H1 (cell line): ENCODE measurements at regions of chr19 and their contacts with region 1.

Region 1: DNA sequence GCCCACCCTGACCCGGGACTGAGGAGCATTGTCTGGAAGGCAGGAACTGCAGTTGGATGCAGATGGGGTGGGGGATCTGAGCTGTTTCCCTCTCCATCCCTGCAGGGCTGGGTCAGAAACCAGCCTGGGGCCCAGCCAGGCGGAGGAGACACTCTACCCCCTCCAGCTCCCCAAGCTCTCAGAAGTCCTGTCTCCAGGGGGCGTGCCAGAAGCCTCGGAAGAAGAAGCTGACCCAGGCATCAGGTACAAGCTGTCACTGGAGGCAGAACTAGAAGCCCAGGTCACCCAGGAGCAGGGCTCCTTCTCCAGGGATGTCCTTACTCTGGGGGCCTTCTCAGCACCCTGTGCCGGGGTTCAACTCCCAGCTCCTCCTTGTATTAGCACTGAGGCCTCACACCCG is 15.5 kb downstream of the SIX5 start:
- DNase-seq: peak in 1 of 2 experiments; percentile 77
- H3K4me3 ChIP-seq: no peak overlapping the region
- H3K27ac ChIP-seq: no peak overlapping the region
- H3K4me1 ChIP-seq: peaks cover 0 to 6% (median 0%) of the 10 kb centered on the region in 4 experiments; a peak in 1 of 7 replicates
- H3K27me3 ChIP-seq: no peaks in the 10 kb centered on the region
- CTCF ChIP-seq: peak; percentile 35 to 55 (median 39); a peak in 3 of 4 replicates
- EP300 ChIP-seq: no peak
- POLR2A ChIP-seq: no peak
- RAD21 ChIP-seq: peak; percentile 17 to 39; a peak in 3 of 4 replicates

Region 2: GRCh38 chr19:45632468-45633196 is 120.9 kb before region 1 on chr19:
- CTCF ChIA-PET with region 1: no interaction called
- POLR2A ChIA-PET with region 1: no interaction called
- DNase-seq: peak in 1 of 2 experiments; percentile 99
- H3K4me3 ChIP-seq: peak overlapping the region; percentile 22 to 50 (median 36); a peak in 7 of 8 replicates
- H3K27ac ChIP-seq: 0 out of 2 replicates have a peak overlapping the region, but pooled peaks have one; percentile 1
- H3K4me1 ChIP-seq: peaks cover 0 to 8% (median 7%) of the 10 kb centered on the region in 4 experiments; a peak in 5 of 7 replicates
- H3K27me3 ChIP-seq: no peaks in the 10 kb centered on the region
- CTCF ChIP-seq: no peak
- EP300 ChIP-seq: no peak
- POLR2A ChIP-seq: no peak; a peak in 1 of 3 replicates
- RAD21 ChIP-seq: no peak

Region 3: GRCh38 chr19:45742969-45743368 is 10.6 kb before region 1 on chr19:
- CTCF ChIA-PET with region 1: interaction called, 10 read pairs
- POLR2A ChIA-PET with region 1: interaction called, 10 read pairs
- DNase-seq: no peak
- H3K4me3 ChIP-seq: no peak overlapping the region
- H3K27ac ChIP-seq: no peak overlapping the region
- H3K4me1 ChIP-seq: no peaks in the 10 kb centered on the region
- H3K27me3 ChIP-seq: no peaks in the 10 kb centered on the region; a peak in 1 of 7 replicates
- CTCF ChIP-seq: no peak
- EP300 ChIP-seq: no peak
- POLR2A ChIP-seq: no peak
- RAD21 ChIP-seq: no peak

Region 4: GRCh38 chr19:45764945-45765701 is 11.6 kb after region 1 on chr19:
- CTCF ChIA-PET with region 1: interaction called, 16 read pairs
- POLR2A ChIA-PET with region 1: interaction called, 153 read pairs
- DNase-seq: peak in 1 of 2 experiments; percentile 65
- H3K4me3 ChIP-seq: peak overlapping the region in 1 of 4 experiments; percentile 36; a peak in 1 of 8 replicates
- H3K27ac ChIP-seq: no peak overlapping the region
- H3K4me1 ChIP-seq: peaks cover 7 to 37% (median 29%) of the 10 kb centered on the region in 4 experiments
- H3K27me3 ChIP-seq: peaks cover 0 to 2% (median 0%) of the 10 kb centered on the region in 4 experiments; a peak in 1 of 7 replicates
- CTCF ChIP-seq: no peak
- EP300 ChIP-seq: no peak
- POLR2A ChIP-seq: peak in 1 of 2 experiments; percentile 29; a peak in 1 of 3 replicates
- RAD21 ChIP-seq: no peak

Region 5: DNA sequence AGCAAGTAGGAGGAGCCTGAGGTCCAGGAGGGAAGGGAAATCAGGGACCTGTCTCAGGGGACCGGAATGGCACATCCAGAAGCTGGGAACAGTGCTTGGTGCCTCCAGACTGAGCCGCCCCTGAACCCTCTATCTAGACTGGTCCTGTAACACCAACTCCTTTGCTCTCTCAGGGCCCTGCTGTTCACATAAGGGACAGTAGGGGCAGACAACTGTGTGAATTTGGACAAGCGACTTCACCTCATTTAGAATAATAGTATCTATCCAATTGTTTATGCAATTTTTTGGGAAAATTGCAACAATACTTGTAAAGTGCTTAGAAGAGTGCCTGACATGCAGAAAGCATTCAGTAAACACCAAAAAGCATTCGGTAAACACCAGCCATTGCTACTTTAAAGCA is 95.4 kb after region 1 on chr19:
- CTCF ChIA-PET with region 1: no interaction called
- POLR2A ChIA-PET with region 1: no interaction called
- DNase-seq: no peak
- H3K4me3 ChIP-seq: no peak overlapping the region
- H3K27ac ChIP-seq: no peak overlapping the region
- H3K4me1 ChIP-seq: no peaks in the 10 kb centered on the region
- H3K27me3 ChIP-seq: no peaks in the 10 kb centered on the region; a peak in 1 of 7 replicates
- CTCF ChIP-seq: peak in 2 of 3 experiments; percentile 12 to 28; a peak in 2 of 4 replicates
- EP300 ChIP-seq: no peak
- POLR2A ChIP-seq: no peak
- RAD21 ChIP-seq: 0 out of 4 replicates have a peak, but pooled peaks of 1 of the 2 experiments have one; percentile 3